ENCODE measurements at regions of chr1 and their contacts with region 1.

Region 1: GRCh38 chr1:3900119-3900968 is at the start of gene C1orf174:
- DNase-seq: peak; percentile 91
- ATAC-seq: peak; percentile 89
- H3K4me3 ChIP-seq: peak within 1 kb of the TSS; percentile 87 to 96
- H3K27ac ChIP-seq: peak within 1 kb of the TSS; percentile 94
- H3K4me1 ChIP-seq: no peaks in the 10 kb centered on the region
- H3K27me3 ChIP-seq: no peaks in the 10 kb centered on the region
- CTCF ChIP-seq: no peak
- total RNA-seq, gene C1orf174: 41.2 TPM

Region 2: DNA sequence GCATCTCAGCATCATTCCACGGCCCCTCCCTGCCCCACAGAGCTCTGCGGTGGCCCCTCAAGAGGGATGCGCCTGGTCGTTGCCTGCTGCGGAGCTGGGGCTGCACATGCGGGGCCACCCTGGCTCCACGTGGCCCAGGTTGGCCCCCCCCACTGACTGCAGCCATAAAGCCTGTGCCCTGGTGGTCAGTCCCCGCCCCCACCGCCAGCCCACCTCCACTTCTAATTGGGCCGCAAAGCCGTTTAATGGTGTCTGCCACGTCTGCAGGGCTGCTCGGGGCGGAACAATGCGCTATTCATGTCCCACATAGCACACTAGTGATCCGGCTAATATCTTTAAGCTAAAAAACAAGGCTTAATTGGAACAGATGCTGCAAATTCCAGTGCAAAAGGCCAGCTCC is 912.6 kb before region 1 on chr1:
- CTCF ChIA-PET with region 1: no interaction called
- POLR2A ChIA-PET with region 1: no interaction called
- in situ Hi-C with region 1: no loop called
- intact Hi-C with region 1: no loop called
- DNase-seq: no peak
- ATAC-seq: no peak
- H3K4me3 ChIP-seq: no peak overlapping the region
- H3K27ac ChIP-seq: no peak overlapping the region
- H3K4me1 ChIP-seq: no peaks in the 10 kb centered on the region
- H3K27me3 ChIP-seq: peaks cover 2% of the 10 kb centered on the region; the same call in 1 of the 2 replicates
- CTCF ChIP-seq: no peak

Region 3: GRCh38 chr1:3803905-3804626 is 96.3 kb before region 1 on chr1:
- CTCF ChIA-PET with region 1: no interaction called
- POLR2A ChIA-PET with region 1: interaction called, 15 read pairs
- in situ Hi-C with region 1: no loop called
- intact Hi-C with region 1: no loop called
- DNase-seq: no peak
- ATAC-seq: no peak
- H3K4me3 ChIP-seq: no peak overlapping the region
- H3K27ac ChIP-seq: no peak overlapping the region
- H3K4me1 ChIP-seq: no peaks in the 10 kb centered on the region
- H3K27me3 ChIP-seq: no peaks in the 10 kb centered on the region
- CTCF ChIP-seq: no peak

Region 4: DNA sequence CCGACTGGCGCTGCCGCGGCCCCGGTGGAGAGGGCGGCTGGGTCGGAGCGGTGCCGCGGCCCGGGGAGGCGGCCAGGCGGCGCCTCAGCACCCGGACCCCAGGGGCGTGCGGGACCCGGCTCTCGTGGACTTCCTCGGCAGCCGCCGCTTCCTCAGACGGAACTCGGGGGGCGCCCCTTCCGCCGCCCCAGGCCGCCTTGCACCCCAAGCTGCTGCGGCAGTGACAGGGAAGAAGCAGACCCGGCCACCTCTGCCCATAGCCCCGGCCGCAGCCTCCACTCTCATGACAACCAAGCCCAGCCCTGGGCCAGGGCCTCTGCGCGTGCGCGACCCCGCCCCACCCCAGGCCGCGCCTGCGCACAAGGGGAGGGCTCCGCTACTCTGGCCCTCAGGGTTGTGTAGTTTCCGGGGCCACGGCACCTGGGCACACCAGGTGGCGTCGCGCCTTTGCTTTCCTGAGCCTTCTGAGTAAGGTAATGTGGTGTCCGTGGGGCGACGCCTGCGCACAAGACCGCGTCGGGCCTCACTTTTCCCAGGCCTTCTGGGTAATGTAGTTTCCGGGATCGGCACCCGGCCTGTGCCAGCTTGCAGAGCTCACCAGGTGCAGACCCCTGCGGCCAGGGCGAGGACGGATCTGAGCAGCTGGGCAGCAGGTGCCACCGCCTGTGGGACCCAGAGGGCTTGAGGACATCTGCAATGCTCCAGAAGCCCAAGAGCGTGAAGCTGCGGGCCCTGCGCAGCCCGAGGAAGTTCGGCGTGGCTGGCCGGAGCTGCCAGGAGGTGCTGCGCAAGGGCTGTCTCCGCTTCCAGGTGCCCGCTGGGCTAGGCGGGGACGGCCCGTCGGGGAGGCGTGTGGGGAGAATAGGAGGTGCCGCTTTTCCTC is 43.2 kb before region 1 on chr1 and contains the starts of genes CEP104 and DFFB:
- CTCF ChIA-PET with region 1: interaction called, 3 read pairs
- POLR2A ChIA-PET with region 1: no interaction called
- in situ Hi-C with region 1: no loop called
- intact Hi-C with region 1: loop called (anchors 1 kb)
- DNase-seq: peak; percentile 89
- ATAC-seq: peak; percentile 95
- H3K4me3 ChIP-seq: peak within 1 kb of the TSS; percentile 65 to 78
- H3K27ac ChIP-seq: peak within 1 kb of the TSS; percentile 70
- H3K4me1 ChIP-seq: peaks cover 12% of the 10 kb centered on the region
- H3K27me3 ChIP-seq: no peaks in the 10 kb centered on the region
- CTCF ChIP-seq: peak; percentile 77
- total RNA-seq, gene CEP104: 52.0 TPM
- total RNA-seq, gene DFFB: 3.0 TPM

Region 5: GRCh38 chr1:4273747-4274146 is 373.4 kb after region 1 on chr1:
- CTCF ChIA-PET with region 1: no interaction called
- POLR2A ChIA-PET with region 1: no interaction called
- in situ Hi-C with region 1: no loop called
- intact Hi-C with region 1: no loop called
- DNase-seq: no peak
- ATAC-seq: no peak
- H3K4me3 ChIP-seq: no peak overlapping the region
- H3K27ac ChIP-seq: no peak overlapping the region
- H3K4me1 ChIP-seq: no peaks in the 10 kb centered on the region
- H3K27me3 ChIP-seq: peaks cover 5% of the 10 kb centered on the region; the same call in 1 of the 2 replicates
- CTCF ChIP-seq: no peak

Region 6: DNA sequence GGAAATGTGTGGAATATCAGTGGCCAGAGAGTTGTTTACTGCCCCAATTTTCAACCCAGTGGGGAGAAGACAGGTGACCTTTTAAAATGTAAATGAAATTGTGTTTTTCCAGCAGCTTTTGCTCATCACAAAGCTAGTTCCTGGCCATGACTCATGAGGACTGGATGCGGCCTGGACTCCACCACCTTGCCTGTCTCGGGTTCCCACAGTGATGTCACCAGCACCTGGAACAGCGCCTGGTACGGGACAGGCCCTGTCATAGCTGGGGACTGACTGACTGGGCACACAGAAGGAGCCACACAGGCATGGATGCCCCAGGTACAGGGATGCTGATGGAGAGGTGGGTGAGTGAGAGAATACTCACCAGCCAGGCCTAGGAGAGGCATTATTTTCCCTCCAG is 1031.1 kb after region 1 on chr1:
- CTCF ChIA-PET with region 1: no interaction called
- POLR2A ChIA-PET with region 1: interaction called, 12 read pairs
- in situ Hi-C with region 1: no loop called
- intact Hi-C with region 1: no loop called
- DNase-seq: no peak
- ATAC-seq: no peak
- H3K4me3 ChIP-seq: no peak overlapping the region
- H3K27ac ChIP-seq: no peak overlapping the region
- H3K4me1 ChIP-seq: no peaks in the 10 kb centered on the region
- H3K27me3 ChIP-seq: no peaks in the 10 kb centered on the region
- CTCF ChIP-seq: no peak

Measured in Panc1 (cell line).